Activated T-helper 1 cell treated with anti-CD3 and anti-CD28 coated beads, Interleukin-12 subunit alpha, Interleukin-12 subunit beta, Interleukin-2, Interleukin-4 antibody, amounts not matched to agents 30 ng/mL and 10 ng/mL and 1 ng/mL, durations not matched to agents 14 hours and 24 hours and 36 hours (primary cell): ENCODE measurements at regions of chr5 and their contacts with region 1.

Region 1: GRCh38 chr5:78984439-78985115 is 533 bp downstream of the ARSB start:
- DNase-seq: peak; percentile 81
- H3K4me3 Mint-ChIP-seq: peak overlapping the region; percentile 85
- H3K27ac Mint-ChIP-seq: peak overlapping the region; percentile 90
- H3K4me1 Mint-ChIP-seq: peaks cover 44% of the 10 kb centered on the region
- H3K27me3 Mint-ChIP-seq: peaks cover 8% of the 10 kb centered on the region

Region 2: DNA sequence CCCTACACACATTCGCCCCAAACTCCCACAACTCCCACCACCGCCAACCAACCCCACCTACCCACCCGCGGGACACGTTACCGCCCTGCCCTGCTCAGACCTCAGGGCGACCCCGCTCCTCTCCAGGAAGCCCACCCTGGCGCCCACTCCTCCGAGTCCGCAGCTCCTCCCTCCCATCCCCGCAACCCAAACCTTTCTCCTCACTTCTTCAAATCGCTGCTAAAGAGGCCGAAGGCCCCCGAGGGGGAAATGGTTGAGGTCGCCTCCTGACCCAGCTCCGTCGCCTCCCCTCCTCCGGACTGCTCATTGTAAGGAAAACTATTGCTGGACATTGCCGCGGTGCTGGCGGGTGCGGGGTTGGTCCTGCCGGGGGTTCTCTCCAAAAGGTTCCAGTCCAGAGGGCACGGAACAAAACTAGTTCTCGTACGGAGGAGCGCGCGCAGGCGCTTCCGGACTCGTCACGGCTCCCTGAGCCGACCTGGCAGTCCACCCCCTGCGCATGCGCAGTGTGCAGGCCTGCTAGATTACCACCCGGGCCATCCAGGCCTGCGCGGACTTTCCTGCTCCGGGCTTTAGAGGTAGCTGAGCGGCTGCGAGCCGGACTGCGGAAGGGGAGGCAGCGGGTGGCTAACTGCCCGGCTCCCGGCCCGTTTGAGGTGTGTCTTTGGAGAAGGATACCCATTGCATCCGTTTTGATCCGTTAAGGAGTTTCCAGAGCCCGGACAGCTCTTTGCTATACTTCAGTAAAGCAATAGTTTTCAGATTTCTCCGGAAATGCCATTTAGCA is 690.1 kb before region 1 on chr5 and contains the start of gene AP3B1:
- intact Hi-C with region 1: loop called (anchors 10 kb)
- DNase-seq: peak; percentile 98
- H3K4me3 Mint-ChIP-seq: peak within 1 kb of the TSS; percentile 90
- H3K27ac Mint-ChIP-seq: peak within 1 kb of the TSS; percentile 96
- H3K4me1 Mint-ChIP-seq: peaks cover 50% of the 10 kb centered on the region
- H3K27me3 Mint-ChIP-seq: peaks cover 20% of the 10 kb centered on the region
- total RNA-seq, gene AP3B1: 40.8 and 40.9 TPM in 2 replicates

Region 3: GRCh38 chr5:78886341-78887230 is 98.0 kb before region 1 on chr5:
- intact Hi-C with region 1: loop called (anchors 2 kb)
- DNase-seq: no peak
- H3K4me3 Mint-ChIP-seq: no peak overlapping the region
- H3K27ac Mint-ChIP-seq: no peak overlapping the region
- H3K4me1 Mint-ChIP-seq: peaks cover 15% of the 10 kb centered on the region
- H3K27me3 Mint-ChIP-seq: peaks cover 4% of the 10 kb centered on the region

Region 4: DNA sequence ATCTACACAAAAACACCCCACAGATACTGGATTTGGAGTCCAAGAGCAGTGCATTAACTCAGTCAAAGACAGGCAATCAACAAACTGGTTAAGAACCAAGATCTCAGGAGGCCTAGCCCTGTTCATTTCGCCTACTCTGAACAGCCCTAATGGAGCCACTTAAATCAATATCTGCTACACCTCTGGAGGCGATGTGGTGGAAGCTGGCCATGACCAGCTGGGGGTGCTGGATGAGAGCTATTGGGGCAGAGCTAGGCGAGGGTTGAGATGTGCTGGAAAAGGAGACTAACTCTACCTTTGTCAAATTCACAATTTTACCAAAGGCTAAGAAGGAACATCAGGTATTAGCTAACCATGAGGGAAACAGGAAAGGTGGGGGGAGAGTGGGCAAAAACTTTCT is 23.8 kb after region 1 on chr5:
- intact Hi-C with region 1: no loop called
- DNase-seq: no peak
- H3K4me3 Mint-ChIP-seq: no peak overlapping the region
- H3K27ac Mint-ChIP-seq: no peak overlapping the region
- H3K4me1 Mint-ChIP-seq: no peaks in the 10 kb centered on the region
- H3K27me3 Mint-ChIP-seq: peaks cover 22% of the 10 kb centered on the region

Region 5: GRCh38 chr5:79020861-79021561 is 36.4 kb after region 1 on chr5:
- intact Hi-C with region 1: loop called (anchors 2 kb)
- DNase-seq: no peak
- H3K4me3 Mint-ChIP-seq: no peak overlapping the region
- H3K27ac Mint-ChIP-seq: no peak overlapping the region
- H3K4me1 Mint-ChIP-seq: peaks cover 6% of the 10 kb centered on the region
- H3K27me3 Mint-ChIP-seq: peaks cover 59% of the 10 kb centered on the region

Region 6: DNA sequence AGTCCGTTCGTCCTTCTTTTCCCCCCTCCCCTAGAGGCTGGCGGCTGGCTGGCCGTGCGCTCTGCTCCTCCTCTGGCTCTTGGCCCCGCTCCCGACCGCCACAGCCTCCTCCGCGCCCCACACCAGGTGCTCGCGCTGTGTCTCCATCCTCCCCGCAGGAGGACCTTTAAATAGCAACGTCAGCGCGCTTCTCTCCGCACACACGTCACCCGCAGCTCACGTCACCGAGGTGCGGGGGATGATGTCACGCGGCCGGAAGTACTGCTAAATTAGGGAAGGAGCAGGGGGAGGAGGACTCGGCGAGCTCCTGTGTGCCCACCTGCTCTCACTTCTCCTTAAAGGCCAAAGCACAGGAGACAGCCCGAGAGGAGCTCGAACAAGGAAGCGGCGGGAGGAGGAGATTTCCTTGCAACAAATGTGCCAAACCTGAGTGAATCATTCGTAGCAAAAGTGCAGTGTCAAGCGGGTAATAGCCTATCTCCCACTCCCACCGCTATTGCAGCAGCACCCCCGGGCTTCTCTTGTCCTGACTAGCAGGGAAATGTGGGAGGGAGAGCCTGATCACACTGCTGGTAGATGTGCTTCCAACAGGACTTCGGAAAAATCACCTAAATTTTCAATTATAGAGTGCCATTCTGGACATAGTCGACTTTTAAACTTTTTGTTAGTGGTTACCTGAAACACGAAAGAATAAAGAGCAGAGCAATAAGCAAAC is 530.0 kb after region 1 on chr5:
- intact Hi-C with region 1: loop called (anchors 5 kb)
- DNase-seq: peak; percentile 88
- H3K4me3 Mint-ChIP-seq: peak overlapping the region; percentile 99
- H3K27ac Mint-ChIP-seq: peak overlapping the region; percentile 100
- H3K4me1 Mint-ChIP-seq: peaks cover 43% of the 10 kb centered on the region
- H3K27me3 Mint-ChIP-seq: peaks cover 26% of the 10 kb centered on the region